ENCODE measurements at regions of chr7 and their contacts with region 1.

Region 1: GRCh38 chr7:14766747-14767146 is 135.8 kb downstream of the DGKB start:
- DNase-seq: no peak
- ATAC-seq: no peak
- H3K4me3 ChIP-seq: no peak overlapping the region
- H3K27ac ChIP-seq: no peak overlapping the region
- H3K4me1 ChIP-seq: peaks cover 19% of the 10 kb centered on the region
- H3K27me3 ChIP-seq: no peaks in the 10 kb centered on the region
- CTCF ChIP-seq: no peak

Region 2: GRCh38 chr7:14799196-14799595 is 32.4 kb after region 1 on chr7:
- intact Hi-C with region 1: no loop called
- DNase-seq: no peak
- ATAC-seq: no peak
- H3K4me3 ChIP-seq: no peak overlapping the region
- H3K27ac ChIP-seq: no peak overlapping the region
- H3K4me1 ChIP-seq: no peaks in the 10 kb centered on the region
- H3K27me3 ChIP-seq: no peaks in the 10 kb centered on the region
- CTCF ChIP-seq: no peak

Region 3: DNA sequence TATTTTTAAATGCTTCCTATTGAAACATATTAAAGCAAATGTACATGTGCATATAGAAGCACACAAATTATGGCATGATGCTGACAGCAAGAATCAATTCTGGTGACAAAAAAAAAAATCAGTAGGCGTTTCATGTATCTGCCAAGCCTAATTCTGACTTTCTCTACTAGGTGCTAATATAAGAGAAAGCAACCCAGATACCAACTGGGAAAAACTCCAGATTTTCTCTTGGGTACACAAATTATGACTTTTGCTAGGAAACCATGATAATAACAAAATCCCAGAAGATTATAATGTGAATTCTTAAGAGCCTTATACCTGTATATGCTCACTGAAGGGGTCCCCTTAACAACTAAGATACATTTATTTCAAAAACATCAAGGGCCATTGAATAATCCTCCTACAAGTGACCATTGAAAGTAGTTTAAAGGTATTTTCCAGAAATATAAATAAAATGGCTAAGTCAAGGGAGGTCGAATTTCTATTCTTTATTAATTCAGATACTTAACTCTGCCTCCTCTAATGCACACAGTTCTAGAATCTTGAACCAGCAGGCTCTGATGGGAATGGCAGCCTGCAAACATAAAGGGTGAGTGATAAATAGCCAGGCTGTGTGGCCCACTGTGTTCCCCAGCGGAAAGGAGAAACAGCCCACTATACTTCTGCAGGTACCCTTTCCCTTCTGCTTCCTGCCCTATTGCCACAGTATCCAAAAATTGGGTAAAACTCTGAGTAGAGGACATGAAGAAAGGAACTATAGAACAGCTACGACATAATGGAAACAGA is 51.3 kb after region 1 on chr7:
- intact Hi-C with region 1: loop called in 1 of 2 experiments (anchors 5 kb)
- DNase-seq: no peak
- ATAC-seq: no peak
- H3K4me3 ChIP-seq: no peak overlapping the region
- H3K27ac ChIP-seq: no peak overlapping the region
- H3K4me1 ChIP-seq: no peaks in the 10 kb centered on the region
- H3K27me3 ChIP-seq: no peaks in the 10 kb centered on the region
- CTCF ChIP-seq: no peak

Region 4: GRCh38 chr7:15236952-15237351 is 470.2 kb after region 1 on chr7:
- intact Hi-C with region 1: no loop called
- DNase-seq: no peak
- ATAC-seq: no peak
- H3K4me3 ChIP-seq: no peak overlapping the region
- H3K27ac ChIP-seq: no peak overlapping the region
- H3K4me1 ChIP-seq: no peaks in the 10 kb centered on the region
- H3K27me3 ChIP-seq: no peaks in the 10 kb centered on the region
- CTCF ChIP-seq: no peak